ENCODE measurements at regions of chr19 and their contacts with region 1.

Region 1: DNA sequence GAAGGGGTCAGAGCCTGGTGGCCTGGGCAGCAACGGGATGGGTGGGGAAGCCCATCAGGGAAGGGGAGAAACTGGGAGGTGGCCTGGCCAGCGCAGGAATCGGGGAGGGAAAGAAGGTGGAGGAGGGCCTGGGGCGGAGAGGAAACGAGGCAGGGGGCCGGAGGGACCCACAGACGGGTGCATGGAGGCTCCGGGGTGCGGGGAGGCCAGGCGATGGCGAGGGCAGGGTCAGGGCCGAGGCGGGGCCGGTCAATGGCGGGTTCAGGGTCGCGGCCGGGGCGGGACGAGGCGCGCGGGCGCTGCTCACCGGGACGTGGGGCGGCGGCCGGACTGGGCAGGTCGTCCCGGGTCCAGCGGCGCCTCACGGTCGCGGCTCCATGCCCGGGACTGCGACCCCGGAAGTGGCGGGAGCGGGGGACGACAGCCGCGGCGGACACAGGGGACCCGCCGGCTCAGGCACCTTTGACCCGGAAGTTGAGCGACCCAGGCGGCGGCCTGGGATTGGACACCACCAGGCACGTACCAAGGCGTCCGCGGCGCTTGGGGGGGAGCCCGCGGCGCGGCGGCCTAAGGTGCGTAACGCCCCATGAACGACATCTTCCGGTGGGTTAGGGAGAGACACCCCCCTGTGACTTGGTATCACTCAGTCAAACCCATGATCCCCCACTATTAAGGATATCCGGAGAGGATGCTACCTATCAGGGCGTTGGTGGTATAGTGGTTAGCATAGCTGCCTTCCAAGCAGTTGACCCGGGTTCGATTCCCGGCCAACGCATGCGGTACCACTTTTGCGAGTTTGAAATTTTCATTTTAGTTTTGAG is at the start of gene DPP9:
- DNase-seq: peak; percentile 97
- H3K4me3 Mint-ChIP-seq: peak within 1 kb of the TSS; percentile 98
- H3K27ac Mint-ChIP-seq: peak within 1 kb of the TSS; percentile 91
- H3K4me1 Mint-ChIP-seq: peaks cover 25% of the 10 kb centered on the region
- H3K27me3 Mint-ChIP-seq: peaks cover 5% of the 10 kb centered on the region
- total RNA-seq, gene DPP9: 93.6 and 95.8 TPM in 2 replicates

Region 2: DNA sequence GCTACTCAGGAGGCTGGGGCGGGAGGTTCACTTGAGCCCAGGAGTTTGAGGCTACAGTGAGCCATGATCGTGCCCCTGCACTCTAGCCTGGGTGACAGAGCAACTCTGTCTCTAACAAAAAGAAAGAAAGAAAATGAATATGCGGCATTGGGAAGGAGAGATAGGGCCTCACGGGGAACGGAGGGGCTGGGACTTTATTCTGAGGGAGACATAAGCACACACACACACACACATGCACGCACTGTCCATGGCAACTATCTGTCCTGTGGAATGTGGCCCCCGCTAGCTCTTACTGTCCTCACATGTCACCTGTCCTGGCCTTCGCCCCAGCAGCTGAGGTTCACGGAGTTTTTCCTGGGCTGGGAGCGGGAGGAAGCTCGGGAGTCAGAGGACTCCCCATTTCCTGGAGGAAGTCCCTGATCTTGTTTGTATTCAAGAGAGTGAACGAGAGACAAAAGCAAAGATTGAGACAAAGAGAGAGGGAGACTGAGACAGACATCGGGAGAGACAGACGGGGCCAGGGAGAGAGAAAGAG is 385.6 kb before region 1 on chr19:
- intact Hi-C with region 1: no loop called
- DNase-seq: no peak
- H3K4me3 Mint-ChIP-seq: peak overlapping the region; percentile 81
- H3K27ac Mint-ChIP-seq: peak overlapping the region; percentile 89
- H3K4me1 Mint-ChIP-seq: peaks cover 29% of the 10 kb centered on the region
- H3K27me3 Mint-ChIP-seq: no peaks in the 10 kb centered on the region

Region 3: GRCh38 chr19:4638828-4639530 is 84.6 kb before region 1 on chr19 and contains the start of gene TNFAIP8L1:
- intact Hi-C with region 1: loop called (anchors 1 kb)
- DNase-seq: peak; percentile 99
- H3K4me3 Mint-ChIP-seq: peak within 1 kb of the TSS; percentile 98
- H3K27ac Mint-ChIP-seq: peak within 1 kb of the TSS; percentile 94
- H3K4me1 Mint-ChIP-seq: peaks cover 32% of the 10 kb centered on the region
- H3K27me3 Mint-ChIP-seq: no peaks in the 10 kb centered on the region
- total RNA-seq, gene TNFAIP8L1: 13.2 and 13.7 TPM in 2 replicates

Region 4: GRCh38 chr19:4768934-4769777 is 45.6 kb after region 1 on chr19:
- intact Hi-C with region 1: loop called (anchors 2 kb)
- DNase-seq: peak; percentile 77
- H3K4me3 Mint-ChIP-seq: no peak overlapping the region
- H3K27ac Mint-ChIP-seq: no peak overlapping the region
- H3K4me1 Mint-ChIP-seq: no peaks in the 10 kb centered on the region
- H3K27me3 Mint-ChIP-seq: peaks cover 5% of the 10 kb centered on the region

Region 5: DNA sequence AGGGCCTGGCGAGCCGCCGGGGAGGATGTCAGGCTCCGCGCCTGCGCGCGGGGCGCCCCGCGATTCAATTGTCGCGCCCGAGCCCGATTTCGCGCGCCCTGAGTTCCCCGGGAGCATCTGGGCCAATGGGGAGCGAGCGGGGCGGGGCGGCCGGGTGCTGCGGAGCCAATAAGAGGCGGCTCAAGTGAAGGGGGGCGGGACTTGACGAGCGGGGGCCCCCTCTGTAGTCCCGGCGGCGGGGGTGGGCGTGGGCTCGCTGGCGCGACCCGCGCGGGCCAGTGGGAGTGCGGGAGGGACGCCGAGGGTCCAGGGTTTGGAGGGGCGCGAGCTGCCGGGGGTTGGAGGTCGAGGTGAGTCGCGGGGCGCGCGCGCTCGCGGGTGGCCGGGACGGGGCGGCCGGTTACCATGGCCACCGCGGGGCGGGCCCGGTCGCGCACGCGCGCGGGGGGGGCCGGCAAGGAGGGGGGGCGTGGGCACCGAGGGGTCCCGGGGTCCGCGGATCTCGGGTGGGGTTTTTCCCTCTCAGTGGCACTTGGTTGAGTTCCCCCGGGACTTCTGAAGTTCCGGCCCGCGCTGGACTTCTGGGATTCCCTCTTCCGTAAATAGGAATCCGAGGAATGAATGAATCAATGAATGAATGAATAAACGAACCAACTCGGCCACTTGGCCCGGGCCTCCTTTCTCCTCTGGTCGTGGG is 186.5 kb after region 1 on chr19:
- intact Hi-C with region 1: loop called (anchors 5 kb)
- DNase-seq: peak; percentile 92
- H3K4me3 Mint-ChIP-seq: peak overlapping the region; percentile 89
- H3K27ac Mint-ChIP-seq: peak overlapping the region; percentile 84
- H3K4me1 Mint-ChIP-seq: peaks cover 36% of the 10 kb centered on the region
- H3K27me3 Mint-ChIP-seq: no peaks in the 10 kb centered on the region

Region 6: DNA sequence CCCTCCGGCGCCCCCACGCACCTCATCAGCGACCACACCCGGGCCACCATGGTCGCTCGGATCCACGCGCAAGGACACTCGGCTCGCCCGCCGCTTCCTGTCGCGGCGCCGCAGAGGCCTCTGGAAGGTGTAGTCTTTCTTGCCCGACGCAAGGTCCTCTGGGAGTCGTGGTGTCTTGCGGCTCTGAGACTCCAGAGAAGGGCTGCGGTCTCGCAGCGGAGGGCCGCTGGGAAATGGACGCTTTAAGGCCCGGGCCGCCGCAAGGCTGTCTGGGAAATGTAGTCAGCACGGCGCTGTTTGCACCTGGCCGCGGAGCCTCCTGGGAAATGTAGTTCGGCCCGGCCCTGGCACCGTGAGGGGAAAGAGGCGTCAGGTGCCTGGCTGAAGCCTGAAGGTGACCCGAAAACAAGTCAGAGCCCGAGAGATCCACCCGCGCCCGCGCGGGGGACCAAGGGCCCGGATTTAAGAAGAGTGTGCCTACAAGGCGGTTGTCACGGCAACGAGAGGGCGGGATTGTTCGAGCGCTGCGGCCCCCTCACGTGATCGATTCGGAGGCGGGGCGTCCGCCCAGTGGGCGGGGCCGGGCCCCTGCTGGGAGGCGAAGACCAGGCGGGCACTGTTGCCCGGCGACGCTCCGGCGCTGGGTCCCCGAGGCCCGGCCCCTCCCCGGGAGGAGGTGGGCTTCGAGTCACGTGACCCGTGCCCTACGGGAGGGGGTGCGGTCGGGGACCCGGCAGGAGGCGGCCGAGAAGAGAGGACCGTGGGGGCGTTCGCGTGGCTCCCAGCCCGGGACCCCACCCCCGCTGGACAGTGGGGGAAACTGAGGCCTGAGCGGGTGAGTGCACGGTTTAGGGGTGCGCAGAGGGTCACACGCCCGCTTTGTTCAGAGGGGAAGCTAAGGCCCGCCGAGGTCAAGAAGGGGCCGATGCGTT is 957.1 kb after region 1 on chr19 and contains the starts of genes HSD11B1L and MICOS13:
- intact Hi-C with region 1: loop called (anchors 2 kb)
- DNase-seq: peak; percentile 97
- H3K4me3 Mint-ChIP-seq: peak within 1 kb of the TSS; percentile 99
- H3K27ac Mint-ChIP-seq: peak within 1 kb of the TSS; percentile 94
- H3K4me1 Mint-ChIP-seq: peaks cover 19% of the 10 kb centered on the region
- H3K27me3 Mint-ChIP-seq: peaks cover 3% of the 10 kb centered on the region
- total RNA-seq, gene HSD11B1L: 1.9 TPM in 2 replicates
- total RNA-seq, gene MICOS13: 57.4 and 60.6 TPM in 2 replicates